ENCODE measurements at regions of chr20 and their contacts with region 1.

Region 1: DNA sequence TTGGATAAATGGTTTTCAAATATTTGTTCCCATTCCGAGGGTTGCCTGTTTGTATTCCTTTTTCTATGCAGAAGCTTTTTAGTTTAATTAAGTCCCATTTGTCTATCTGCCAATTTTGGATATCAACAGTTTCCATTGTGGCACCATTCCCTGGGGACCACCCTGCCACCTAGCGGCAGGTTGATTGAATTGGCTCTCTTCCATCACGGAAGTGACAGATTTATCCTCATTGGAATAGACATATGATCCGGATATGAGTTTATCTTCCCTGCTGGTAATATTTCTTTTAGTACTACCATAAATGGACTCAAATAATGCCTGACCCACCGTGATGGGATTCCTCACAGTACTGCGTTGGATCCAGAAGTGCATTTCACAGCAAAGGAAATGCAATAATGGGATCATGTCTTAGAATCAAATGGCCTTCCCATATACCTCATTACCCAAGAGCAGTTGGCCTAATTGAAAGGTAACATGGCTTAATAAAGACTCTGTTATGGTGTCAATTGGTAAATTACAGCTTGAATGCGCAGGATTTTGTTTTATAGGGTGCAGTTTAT is 327.0 kb downstream of the BMP2 start:
- DNase-seq: peak; percentile 13 to 41 (median 29)
- H3K4me3 ChIP-seq: no peak overlapping the region
- H3K4me3 Mint-ChIP-seq: no peak overlapping the region
- H3K27ac ChIP-seq: no peak overlapping the region
- H3K27ac Mint-ChIP-seq: no peak overlapping the region
- H3K4me1 ChIP-seq: no peaks in the 10 kb centered on the region
- H3K4me1 Mint-ChIP-seq: no peaks in the 10 kb centered on the region
- H3K27me3 ChIP-seq: peaks cover 0 to 2% of the 10 kb centered on the region in 2 donors
- H3K27me3 Mint-ChIP-seq: peaks cover 3 to 4% (median 3%) of the 10 kb centered on the region in 3 donors
- CTCF ChIP-seq: peak; percentile 90

Region 2: GRCh38 chr20:6767536-6768227 is 326.8 kb before region 1 on chr20 and contains the start of gene BMP2:
- intact Hi-C with region 1: loop called in 1 of 2 experiments (anchors 5 kb)
- DNase-seq: peak in 1 of 3 donors; percentile 6
- H3K4me3 ChIP-seq: peak within 1 kb of the TSS; percentile 30 to 71 (median 54)
- H3K4me3 Mint-ChIP-seq: peak within 1 kb of the TSS; percentile 74 to 84
- H3K27ac ChIP-seq: no peak within 1 kb of the TSS
- H3K27ac Mint-ChIP-seq: no peak within 1 kb of the TSS
- H3K4me1 ChIP-seq: peaks cover 10 to 16% of the 10 kb centered on the region in 2 donors
- H3K4me1 Mint-ChIP-seq: peaks cover 15% of the 10 kb centered on the region
- H3K27me3 ChIP-seq: peaks cover 66 to 70% of the 10 kb centered on the region in 2 donors
- H3K27me3 Mint-ChIP-seq: peaks cover 59 to 80% (median 61%) of the 10 kb centered on the region in 3 donors
- CTCF ChIP-seq: no peak
- polyA plus RNA-seq, gene BMP2: 0.07 TPM in 1 of 3 donors, not detected in the others

Region 3: DNA sequence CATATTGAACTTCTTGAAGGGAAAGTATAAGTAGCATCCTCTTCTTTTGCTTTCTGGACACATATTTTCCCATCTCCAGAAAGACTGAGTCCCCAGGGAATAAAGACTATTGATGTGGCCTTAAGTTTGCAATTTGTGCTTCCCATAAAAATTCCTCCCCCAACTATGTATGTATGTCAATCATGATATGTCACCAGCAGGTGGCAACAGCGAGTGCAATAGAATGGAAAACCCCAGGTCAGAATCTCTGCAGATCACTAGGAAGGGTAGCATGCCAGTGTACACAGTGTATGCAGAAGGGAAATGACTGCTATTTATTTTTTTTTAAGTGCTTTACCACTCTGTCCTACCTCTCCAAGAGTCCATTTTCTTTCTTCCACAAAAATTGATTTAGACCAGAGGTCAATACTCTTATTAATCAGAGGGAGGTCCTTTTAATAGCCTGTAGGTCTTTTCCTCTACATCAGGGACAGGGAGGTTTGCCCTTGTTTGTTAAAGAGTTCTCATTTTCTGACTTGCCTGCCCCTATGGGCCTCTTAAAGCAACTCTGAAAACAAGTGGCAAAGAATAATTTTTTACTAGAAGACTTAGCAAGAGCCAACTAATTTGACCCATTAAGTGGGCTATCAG is 265.6 kb before region 1 on chr20:
- intact Hi-C with region 1: loop called in 1 of 2 experiments (anchors 10 kb)
- DNase-seq: peak; percentile 32 to 58 (median 47)
- H3K4me3 ChIP-seq: no peak overlapping the region
- H3K4me3 Mint-ChIP-seq: no peak overlapping the region
- H3K27ac ChIP-seq: no peak overlapping the region
- H3K27ac Mint-ChIP-seq: no peak overlapping the region
- H3K4me1 ChIP-seq: no peaks in the 10 kb centered on the region
- H3K4me1 Mint-ChIP-seq: no peaks in the 10 kb centered on the region
- H3K27me3 ChIP-seq: no peaks in the 10 kb centered on the region
- H3K27me3 Mint-ChIP-seq: peaks cover 1 to 4% (median 2%) of the 10 kb centered on the region in 3 donors
- CTCF ChIP-seq: peak; percentile 78

Region 4: GRCh38 chr20:7003598-7003997 is 90.9 kb before region 1 on chr20:
- intact Hi-C with region 1: no loop called
- DNase-seq: peak in 1 of 3 donors; percentile 3
- H3K4me3 ChIP-seq: no peak overlapping the region
- H3K4me3 Mint-ChIP-seq: no peak overlapping the region
- H3K27ac ChIP-seq: no peak overlapping the region
- H3K27ac Mint-ChIP-seq: no peak overlapping the region
- H3K4me1 ChIP-seq: no peaks in the 10 kb centered on the region
- H3K4me1 Mint-ChIP-seq: peaks cover 3% of the 10 kb centered on the region
- H3K27me3 ChIP-seq: no peaks in the 10 kb centered on the region
- H3K27me3 Mint-ChIP-seq: peaks cover 1 to 2% (median 1%) of the 10 kb centered on the region in 3 donors
- CTCF ChIP-seq: no peak

Region 5: DNA sequence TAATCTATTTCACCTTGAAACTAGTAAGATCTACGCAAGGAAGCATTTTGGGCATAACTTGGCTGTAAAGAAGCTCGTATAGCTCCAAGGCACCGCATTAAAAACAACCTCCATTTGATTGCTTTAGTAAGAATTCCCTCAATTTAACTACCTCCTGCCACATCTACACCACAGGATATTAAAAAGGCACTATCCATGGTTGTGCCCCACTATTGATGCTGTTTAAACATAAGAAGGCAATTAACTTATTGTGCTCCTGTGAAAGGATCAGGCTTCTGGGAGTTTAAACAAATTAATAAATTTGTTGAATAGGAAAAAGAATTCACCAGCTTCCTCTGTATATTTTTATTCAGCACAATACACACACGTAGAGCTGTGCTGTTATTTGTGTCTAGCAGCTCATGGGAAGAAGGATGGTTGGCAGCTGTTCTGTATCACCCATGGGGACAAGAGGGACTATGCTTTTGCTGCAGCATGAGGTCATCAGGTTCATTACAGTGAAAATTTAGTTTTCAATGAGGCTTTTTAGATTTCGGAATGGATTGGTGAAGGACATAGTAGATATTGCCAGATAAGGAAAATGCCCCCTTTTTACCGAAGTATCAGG is 332.5 kb after region 1 on chr20:
- intact Hi-C with region 1: no loop called
- DNase-seq: no peak
- H3K4me3 ChIP-seq: no peak overlapping the region
- H3K4me3 Mint-ChIP-seq: no peak overlapping the region
- H3K27ac ChIP-seq: no peak overlapping the region
- H3K27ac Mint-ChIP-seq: no peak overlapping the region
- H3K4me1 ChIP-seq: no peaks in the 10 kb centered on the region
- H3K4me1 Mint-ChIP-seq: no peaks in the 10 kb centered on the region
- H3K27me3 ChIP-seq: no peaks in the 10 kb centered on the region
- H3K27me3 Mint-ChIP-seq: peaks cover 0 to 4% (median 0%) of the 10 kb centered on the region in 3 donors
- CTCF ChIP-seq: no peak

Measured in CD14-positive monocyte (primary cell).